Calu3 (cell line): ENCODE measurements at regions of chr14 and their contacts with region 1.

Region 1: DNA sequence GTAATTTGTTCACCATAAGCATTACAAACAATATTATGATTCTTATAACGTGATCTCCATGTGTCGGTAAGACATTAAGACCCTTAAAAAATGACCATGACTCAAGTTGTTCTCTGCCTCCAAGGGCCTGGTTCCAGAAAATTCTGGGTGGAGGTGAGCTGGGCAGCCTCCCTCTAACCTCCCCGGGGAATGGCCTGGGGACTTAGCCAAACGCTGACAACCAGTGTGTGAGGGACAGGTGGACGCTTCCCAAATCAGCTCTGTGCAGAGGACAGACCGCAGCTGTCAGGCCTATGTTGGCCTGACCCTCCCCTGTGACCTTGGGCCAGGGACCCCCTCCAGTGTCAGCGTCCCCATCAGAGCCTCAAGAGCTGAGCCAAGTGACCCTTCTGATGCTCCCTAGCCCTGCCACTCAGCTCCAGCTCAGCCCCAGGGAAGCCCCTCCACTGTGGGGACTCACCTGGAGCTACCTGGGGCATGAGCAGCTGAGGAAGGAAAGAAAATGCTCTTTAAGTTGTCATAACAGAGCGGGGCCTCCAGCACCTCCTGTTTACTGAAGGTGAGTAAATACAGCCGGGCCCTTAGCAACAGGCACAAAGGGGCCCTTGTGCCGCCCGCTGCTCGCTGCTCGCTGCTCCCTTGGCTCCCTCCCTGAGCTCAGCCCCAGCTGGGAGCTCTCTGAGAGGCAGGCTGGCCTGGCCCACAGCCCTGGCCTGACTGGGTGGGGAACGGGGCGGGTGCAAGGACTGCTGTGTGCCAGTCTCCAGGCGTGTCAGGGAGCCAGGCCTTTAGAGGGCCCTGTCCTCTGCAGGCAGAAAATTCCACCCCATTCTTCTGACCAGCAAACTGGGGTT is 116.6 kb downstream of the CALM1 start:
- DNase-seq: peak; percentile 96
- H3K4me3 Mint-ChIP-seq: peak overlapping the region; percentile 58
- H3K27ac Mint-ChIP-seq: peak overlapping the region; percentile 99
- H3K4me1 Mint-ChIP-seq: peaks cover 60% of the 10 kb centered on the region
- H3K27me3 Mint-ChIP-seq: no peaks in the 10 kb centered on the region
- CTCF ChIP-seq: no peak

Region 2: DNA sequence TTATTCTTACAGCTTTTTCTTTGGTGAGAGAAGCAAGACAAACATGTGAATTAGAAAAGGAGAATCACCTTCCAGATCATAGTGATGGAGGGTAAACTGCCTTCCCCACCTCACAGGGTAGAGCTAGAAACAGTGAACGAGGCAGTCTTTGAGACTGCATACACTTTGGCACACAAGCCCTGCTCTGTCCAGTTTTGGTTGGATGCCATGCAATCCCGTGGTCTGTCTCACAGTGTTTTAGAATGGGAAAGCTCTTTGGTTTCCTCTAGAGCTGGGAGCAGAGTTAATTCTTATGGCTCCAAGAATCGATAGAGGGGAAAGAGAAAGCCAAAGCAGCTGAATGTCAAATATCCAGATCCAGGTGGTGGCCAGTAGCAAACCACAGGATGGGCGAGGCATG is 535.7 kb before region 1 on chr14:
- CTCF ChIA-PET with region 1: no interaction called
- intact Hi-C with region 1: no loop called
- DNase-seq: no peak
- H3K4me3 Mint-ChIP-seq: no peak overlapping the region
- H3K27ac Mint-ChIP-seq: no peak overlapping the region
- H3K4me1 Mint-ChIP-seq: no peaks in the 10 kb centered on the region
- H3K27me3 Mint-ChIP-seq: no peaks in the 10 kb centered on the region
- CTCF ChIP-seq: no peak

Region 3: GRCh38 chr14:90454041-90455000 is 59.1 kb before region 1 on chr14:
- CTCF ChIA-PET with region 1: interaction called, 8 read pairs
- intact Hi-C with region 1: loop called (anchors 2 kb)
- DNase-seq: peak; percentile 95
- H3K4me3 Mint-ChIP-seq: peak overlapping the region; percentile 75
- H3K27ac Mint-ChIP-seq: peak overlapping the region; percentile 88
- H3K4me1 Mint-ChIP-seq: no peaks in the 10 kb centered on the region
- H3K27me3 Mint-ChIP-seq: no peaks in the 10 kb centered on the region
- CTCF ChIP-seq: no peak

Region 4: GRCh38 chr14:90545966-90546751 is 32.8 kb after region 1 on chr14:
- CTCF ChIA-PET with region 1: no interaction called
- intact Hi-C with region 1: no loop called
- DNase-seq: no peak
- H3K4me3 Mint-ChIP-seq: no peak overlapping the region
- H3K27ac Mint-ChIP-seq: no peak overlapping the region
- H3K4me1 Mint-ChIP-seq: no peaks in the 10 kb centered on the region
- H3K27me3 Mint-ChIP-seq: no peaks in the 10 kb centered on the region
- CTCF ChIP-seq: no peak

Region 5: GRCh38 chr14:90642244-90642717 is 128.9 kb after region 1 on chr14:
- CTCF ChIA-PET with region 1: interaction called, 5 read pairs
- intact Hi-C with region 1: loop called (anchors 2 kb)
- DNase-seq: peak; percentile 30
- H3K4me3 Mint-ChIP-seq: no peak overlapping the region
- H3K27ac Mint-ChIP-seq: peak overlapping the region; percentile 52
- H3K4me1 Mint-ChIP-seq: peaks cover 42% of the 10 kb centered on the region
- H3K27me3 Mint-ChIP-seq: no peaks in the 10 kb centered on the region
- CTCF ChIP-seq: no peak